ENCODE measurements at regions of chr13 and their contacts with region 1.

Region 1: GRCh38 chr13:97109841-97110492 is 112.2 kb upstream of the MBNL2 start:
- DNase-seq: peak; percentile 84 to 99 (median 90)

Region 2: GRCh38 chr13:96851856-96852445 is 258.0 kb before region 1 on chr13:
- intact Hi-C with region 1: no loop called
- DNase-seq: no peak

Region 3: GRCh38 chr13:97067017-97067895 is 42.7 kb before region 1 on chr13:
- intact Hi-C with region 1: no loop called
- DNase-seq: no peak

Region 4: GRCh38 chr13:97212601-97213040 is 102.7 kb after region 1 on chr13:
- intact Hi-C with region 1: loop called (anchors 2 kb)
- DNase-seq: peak in 2 of 10 donors; percentile 37 to 56

Region 5: DNA sequence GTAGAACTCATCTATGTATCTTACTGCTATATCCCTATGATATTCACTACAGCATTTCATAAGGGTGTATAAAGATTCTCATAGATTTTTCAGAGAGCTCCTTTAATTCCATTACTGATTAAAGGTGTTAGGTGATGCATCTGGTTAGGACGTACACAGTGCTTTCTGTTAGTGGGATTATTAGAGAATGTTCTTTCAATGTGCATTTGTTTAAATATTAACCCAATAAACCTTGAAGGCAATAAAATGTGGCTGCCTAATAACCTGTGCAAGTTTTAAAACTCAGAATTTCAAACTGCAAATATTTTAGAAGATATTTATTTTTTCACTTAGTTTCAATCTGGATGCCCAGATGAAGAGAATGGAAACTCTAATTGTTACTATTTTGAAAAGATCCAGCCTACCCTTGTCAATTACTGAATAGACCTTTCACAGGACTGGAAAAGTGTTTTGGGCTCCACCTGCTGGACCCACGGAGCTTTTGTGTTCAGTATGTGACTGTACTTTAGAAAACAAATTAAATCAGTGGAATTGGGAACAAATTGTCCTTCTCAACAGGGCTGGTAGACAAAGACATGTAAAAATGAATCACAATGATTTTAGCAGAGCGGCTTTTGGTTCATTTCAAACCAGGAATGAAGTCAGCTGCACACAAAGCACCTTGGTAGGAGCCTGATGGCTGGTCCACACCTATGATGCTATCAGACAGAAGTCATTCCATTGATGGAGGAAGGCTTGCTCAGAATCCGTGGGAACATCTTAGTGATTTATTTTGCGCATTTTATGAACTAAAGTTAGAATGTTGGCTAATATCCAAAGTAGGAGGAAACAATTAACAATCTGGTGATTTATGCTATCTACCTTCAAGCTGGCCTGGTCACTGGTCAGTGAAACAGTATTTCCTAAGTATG is 234.6 kb after region 1 on chr13:
- intact Hi-C with region 1: loop called (anchors 5 kb)
- DNase-seq: peak in 9 of 10 donors; percentile 39 to 95 (median 74)

Region 6: GRCh38 chr13:97359181-97360057 is 249.5 kb after region 1 on chr13:
- intact Hi-C with region 1: loop called (anchors 1 kb)
- DNase-seq: peak in 5 of 10 donors; percentile 34 to 86 (median 44)

Region 7: GRCh38 chr13:97422118-97423054 is 312.4 kb after region 1 on chr13:
- intact Hi-C with region 1: no loop called
- DNase-seq: no peak

Region 8: GRCh38 chr13:97432917-97433726 is 323.2 kb after region 1 on chr13:
- intact Hi-C with region 1: loop called (anchors 5 kb)
- DNase-seq: peak; percentile 98 to 100 (median 98)

Measured in posterior cingulate gyrus (tissue), 11 donors.